ENCODE measurements at regions of chr11 and their contacts with region 1.

Region 1: GRCh38 chr11:113730887-113731726 is 25.0 kb upstream of the TMPRSS5 start:
- DNase-seq: peak in 41 of 42 donors; percentile 18 to 86 (median 67)

Region 2: GRCh38 chr11:112942966-112943643 is 788.0 kb before region 1 on chr11:
- intact Hi-C with region 1: no loop called
- DNase-seq: no peak

Region 3: DNA sequence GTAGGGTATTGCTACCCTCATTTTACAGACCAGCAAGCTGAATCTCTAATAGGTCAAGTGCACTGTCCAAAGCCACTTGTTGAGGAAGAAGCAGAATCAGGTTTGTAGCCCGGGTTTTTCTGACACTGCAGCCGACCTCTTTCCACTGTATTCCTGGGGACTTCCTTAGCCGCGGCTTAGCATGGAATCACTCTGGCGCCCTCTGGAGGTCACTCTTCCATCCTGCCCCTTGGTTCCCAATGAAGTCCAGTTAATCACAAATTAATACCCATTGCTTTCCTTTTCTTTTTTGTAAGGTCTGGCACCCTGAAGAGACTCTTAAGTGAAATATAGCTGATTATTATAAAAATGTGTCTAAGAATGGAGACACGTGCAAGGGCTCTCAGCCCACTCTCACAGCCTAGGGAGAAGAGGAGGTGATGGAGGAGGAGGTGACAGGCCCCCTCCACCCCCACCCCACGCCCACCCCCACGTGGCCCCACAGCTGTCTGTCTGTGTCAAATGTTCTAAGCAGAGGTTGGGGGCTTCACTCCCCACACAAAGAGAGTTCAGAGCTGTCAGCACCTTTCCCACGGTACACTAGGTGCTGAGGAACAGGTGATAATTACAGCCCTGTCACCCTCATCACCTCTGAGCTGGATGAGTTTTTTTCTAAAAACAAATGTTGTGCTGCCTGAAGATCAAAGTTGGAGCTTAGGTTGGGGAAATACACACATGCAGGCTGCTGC is 198.2 kb before region 1 on chr11:
- intact Hi-C with region 1: loop called (anchors 10 kb)
- DNase-seq: peak; percentile 69 to 96 (median 87)

Measured in head of caudate nucleus (tissue), 42 donors.